Caco-2 (cell line): ENCODE measurements at regions of chr5 and their contacts with region 1.

Region 1: DNA sequence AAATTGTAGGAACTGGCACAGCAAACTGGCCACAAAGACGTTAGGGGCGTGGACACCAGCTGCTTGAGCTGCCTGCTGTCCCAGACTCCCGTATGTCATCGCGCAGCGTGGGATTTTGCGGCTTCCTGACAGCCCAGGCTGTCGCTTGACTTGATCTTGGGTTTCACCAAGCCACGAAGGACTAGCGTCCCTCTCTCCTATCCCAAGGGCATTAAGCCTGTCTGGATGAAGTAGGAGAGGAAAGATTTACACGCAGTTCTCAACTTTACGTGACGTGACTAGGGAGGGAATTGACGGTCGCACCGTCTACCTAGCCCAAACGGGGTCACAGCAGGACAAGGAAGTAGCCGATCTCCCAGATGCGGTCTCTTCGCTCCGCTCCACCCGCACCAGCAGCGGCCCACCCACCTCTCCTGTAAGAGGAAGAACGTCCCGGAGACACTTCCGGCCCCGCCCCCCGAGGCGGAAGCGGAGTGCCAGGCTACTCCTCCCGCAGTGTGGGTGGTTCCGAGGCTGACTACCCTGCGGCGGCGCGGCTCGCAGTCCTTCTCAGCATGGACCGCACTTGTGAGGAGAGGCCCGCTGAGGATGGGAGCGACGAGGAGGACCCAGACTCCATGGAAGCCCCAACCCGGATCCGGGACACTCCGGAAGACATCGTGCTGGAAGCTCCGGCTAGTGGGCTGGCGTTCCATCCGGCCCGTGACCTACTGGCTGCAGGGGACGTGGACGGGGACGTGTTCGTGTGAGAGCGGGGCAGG is at the start of gene WDR55:
- DNase-seq: peak; percentile 97
- H3K4me3 ChIP-seq: peak within 1 kb of the TSS; percentile 86
- H3K4me3 Mint-ChIP-seq: peak within 1 kb of the TSS; percentile 98
- H3K27ac Mint-ChIP-seq: peak within 1 kb of the TSS; percentile 89
- H3K4me1 ChIP-seq: peaks cover 7% of the 10 kb centered on the region; the same call in 1 of the 2 replicates
- H3K4me1 Mint-ChIP-seq: peaks cover 14% of the 10 kb centered on the region
- H3K27me3 ChIP-seq: no peaks in the 10 kb centered on the region
- H3K27me3 Mint-ChIP-seq: no peaks in the 10 kb centered on the region
- CTCF ChIP-seq: no peak
- total RNA-seq, gene WDR55: 38.8 and 40.2 TPM in 2 replicates

Region 2: DNA sequence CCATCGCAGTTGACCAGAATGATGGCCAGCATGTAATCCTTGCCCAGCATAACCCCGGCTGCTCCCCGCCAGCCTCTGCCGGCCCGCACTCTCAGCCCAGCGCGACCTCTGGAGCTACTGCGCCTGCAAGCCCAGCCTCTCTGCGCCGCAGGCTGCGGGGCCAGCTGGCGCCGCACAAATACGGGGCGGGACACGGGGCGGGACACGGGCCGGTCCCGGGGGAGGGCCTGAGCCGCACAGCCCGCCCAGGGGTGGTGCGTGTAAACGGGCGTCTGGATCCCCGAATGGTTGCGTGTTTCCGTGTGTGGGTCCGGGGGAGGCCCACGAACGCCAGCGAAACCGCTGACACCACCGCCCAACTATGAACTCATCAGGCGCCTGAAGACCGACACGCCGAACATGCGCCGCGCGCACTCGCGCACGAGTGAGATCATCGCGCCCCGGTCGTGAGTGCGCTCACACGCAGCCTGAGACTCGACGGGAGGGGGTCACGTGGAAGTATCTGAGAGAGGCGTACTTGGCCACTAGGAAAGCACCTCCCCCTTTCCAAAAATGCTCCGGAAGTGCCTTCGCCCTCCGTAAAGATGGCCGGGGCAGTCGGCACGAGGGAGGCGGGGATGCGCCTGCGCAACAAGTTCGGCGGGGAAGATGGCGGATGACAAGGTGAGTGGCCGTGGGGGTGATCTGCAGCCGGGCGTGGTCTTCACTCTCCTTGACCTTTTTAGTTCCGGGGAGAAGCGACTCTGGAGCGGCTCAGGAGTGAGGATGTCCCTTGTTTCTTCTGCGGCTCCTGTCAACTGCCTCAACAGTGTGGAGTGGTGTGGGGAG is 100.1 kb before region 1 on chr5 and contains the starts of genes APBB3 and SLC35A4:
- CTCF ChIA-PET with region 1: no interaction called
- POLR2A ChIA-PET with region 1: no interaction called
- intact Hi-C with region 1: no loop called
- DNase-seq: peak; percentile 96 to 98
- H3K4me3 ChIP-seq: peak within 1 kb of the TSS; percentile 68
- H3K4me3 Mint-ChIP-seq: peak within 1 kb of the TSS; percentile 84
- H3K27ac Mint-ChIP-seq: peak within 1 kb of the TSS; percentile 93
- H3K4me1 ChIP-seq: peaks cover 7% of the 10 kb centered on the region; the same call in 1 of the 2 replicates
- H3K4me1 Mint-ChIP-seq: peaks cover 6% of the 10 kb centered on the region
- H3K27me3 ChIP-seq: no peaks in the 10 kb centered on the region
- H3K27me3 Mint-ChIP-seq: no peaks in the 10 kb centered on the region
- CTCF ChIP-seq: no peak
- total RNA-seq, gene APBB3: 23.4 and 25.1 TPM in 2 replicates
- total RNA-seq, gene SLC35A4: 79.5 and 91.3 TPM in 2 replicates

Region 3: DNA sequence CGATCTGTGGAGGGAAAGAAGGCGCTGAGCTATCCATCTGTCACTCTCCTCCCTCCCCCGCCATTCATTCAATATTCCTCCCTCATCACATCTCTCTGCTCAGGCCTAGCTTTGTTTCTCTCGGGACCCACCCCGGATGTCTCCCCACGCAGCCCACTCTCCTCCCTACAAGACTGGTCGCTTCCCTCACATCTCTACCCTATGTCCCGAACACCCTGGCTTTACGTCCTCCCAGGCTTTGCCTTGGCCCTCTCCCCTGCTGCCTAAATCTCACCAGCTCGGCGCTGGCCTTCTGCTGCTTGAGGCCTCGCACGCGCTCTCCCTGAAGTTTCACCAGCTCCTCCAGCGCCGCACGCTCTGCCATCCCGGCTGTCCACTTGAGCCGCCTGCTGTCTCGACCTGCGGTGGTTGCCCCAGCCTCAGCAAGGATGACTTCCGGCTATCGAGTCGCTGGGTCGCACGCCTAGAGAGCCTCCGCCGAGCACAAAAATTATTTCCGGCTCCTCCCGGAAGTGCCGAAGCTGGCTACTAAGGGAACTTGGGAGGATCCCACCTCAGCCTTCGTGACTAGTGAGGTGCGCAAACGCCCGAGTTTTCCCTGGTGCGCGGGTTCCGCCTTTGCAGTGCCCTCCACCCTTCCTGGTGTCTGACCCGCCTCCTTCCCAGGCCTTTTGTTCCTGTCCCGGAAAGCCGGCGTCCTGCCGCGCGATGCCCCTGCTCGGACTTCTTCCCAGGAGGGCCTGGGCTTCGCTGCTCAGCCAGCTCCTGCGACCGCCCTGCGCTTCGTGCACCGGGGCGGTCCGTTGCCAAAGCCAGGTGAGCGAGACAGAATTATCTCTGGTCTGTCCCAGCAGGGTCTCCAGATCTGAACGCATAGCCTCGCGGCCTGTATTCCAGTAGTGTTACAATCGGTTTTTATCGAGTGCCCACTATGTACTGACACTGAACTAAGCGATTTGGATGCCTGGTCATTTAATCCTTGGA is 26.7 kb after region 1 on chr5 and contains the starts of genes HARS1 and HARS2:
- CTCF ChIA-PET with region 1: no interaction called
- POLR2A ChIA-PET with region 1: interaction called, 5 read pairs
- intact Hi-C with region 1: loop called (anchors 1 kb)
- DNase-seq: peak; percentile 94 to 96
- H3K4me3 ChIP-seq: peak within 1 kb of the TSS; percentile 96
- H3K4me3 Mint-ChIP-seq: peak within 1 kb of the TSS; percentile 94
- H3K27ac Mint-ChIP-seq: peak within 1 kb of the TSS; percentile 89
- H3K4me1 ChIP-seq: peaks cover 16% of the 10 kb centered on the region; the same call in 1 of the 2 replicates
- H3K4me1 Mint-ChIP-seq: no peaks in the 10 kb centered on the region
- H3K27me3 ChIP-seq: no peaks in the 10 kb centered on the region
- H3K27me3 Mint-ChIP-seq: no peaks in the 10 kb centered on the region
- CTCF ChIP-seq: no peak
- total RNA-seq, gene HARS1: 82.4 and 83.5 TPM in 2 replicates
- total RNA-seq, gene HARS2: 36.5 and 38.6 TPM in 2 replicates

Region 4: DNA sequence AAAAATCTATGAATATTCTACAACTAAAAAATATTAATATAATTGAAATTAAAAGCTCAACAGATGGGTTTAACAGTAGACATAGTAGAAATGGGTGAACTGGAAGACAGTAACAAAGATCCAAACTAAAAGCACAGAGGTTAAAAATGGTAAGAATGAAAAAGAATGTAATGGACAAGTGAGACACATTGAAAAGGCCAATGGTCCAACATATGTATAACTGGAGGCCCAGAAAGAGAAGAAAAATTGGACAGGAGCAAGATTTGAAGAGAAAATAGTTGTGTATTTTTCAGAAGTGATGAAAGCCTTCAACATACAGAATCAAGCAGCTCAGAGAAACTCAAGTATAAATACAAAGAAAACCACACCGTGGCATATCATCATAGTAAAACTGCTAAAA is 882.9 kb after region 1 on chr5:
- CTCF ChIA-PET with region 1: no interaction called
- POLR2A ChIA-PET with region 1: interaction called, 11 read pairs
- intact Hi-C with region 1: no loop called
- DNase-seq: no peak
- H3K4me3 ChIP-seq: no peak overlapping the region
- H3K4me3 Mint-ChIP-seq: no peak overlapping the region
- H3K27ac Mint-ChIP-seq: no peak overlapping the region
- H3K4me1 ChIP-seq: no peaks in the 10 kb centered on the region
- H3K4me1 Mint-ChIP-seq: no peaks in the 10 kb centered on the region
- H3K27me3 ChIP-seq: no peaks in the 10 kb centered on the region
- H3K27me3 Mint-ChIP-seq: no peaks in the 10 kb centered on the region
- CTCF ChIP-seq: no peak